Heart left ventricle (tissue), 16 donors: ENCODE measurements at regions of chr2 and their contacts with region 1.

Region 1: DNA sequence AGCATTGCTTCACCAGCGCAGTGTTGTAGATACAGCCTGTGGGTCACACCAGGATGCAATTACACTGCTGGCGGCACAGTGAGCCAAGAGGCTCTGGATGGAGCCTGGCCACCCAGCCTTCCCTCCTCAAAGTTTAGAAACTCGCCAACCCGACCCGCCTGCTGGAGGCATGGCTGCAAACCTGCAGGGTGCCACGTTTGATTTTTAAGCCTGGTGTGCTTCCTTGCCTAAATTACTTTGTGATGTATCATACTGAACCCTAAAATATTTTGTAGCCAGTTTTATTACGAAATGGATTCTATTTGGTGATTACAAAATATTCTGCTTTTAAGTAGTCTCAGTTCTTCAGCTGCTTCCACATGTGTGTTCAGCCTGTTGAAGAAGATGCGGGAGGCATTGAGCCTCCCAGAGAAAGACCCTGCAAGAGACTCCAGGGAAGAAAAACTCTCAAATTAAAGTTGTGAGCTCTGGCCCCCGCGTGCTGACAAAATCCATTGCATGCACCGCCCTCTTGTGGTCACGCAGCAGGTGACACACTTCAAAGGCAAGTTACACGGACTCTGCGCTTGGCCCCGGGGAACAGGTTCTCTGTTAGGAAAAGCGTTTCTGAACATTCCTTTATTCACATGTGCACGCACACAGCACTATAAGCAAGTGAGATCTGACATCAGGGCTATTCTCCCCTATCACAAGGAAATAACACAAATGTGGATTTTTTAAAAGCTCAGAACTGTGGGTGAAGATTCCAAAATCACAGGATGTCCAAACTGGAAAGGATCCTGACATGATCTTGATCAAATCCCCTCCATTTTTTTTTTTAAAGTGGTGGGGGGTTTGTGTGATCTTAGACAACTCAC is 63.0 kb upstream of the TWIST2 start:
- DNase-seq: peak; percentile 45 to 78 (median 56)
- ATAC-seq: peak in 3 of 4 donors; percentile 62 to 87 (median 78)
- H3K4me3 ChIP-seq: peak overlapping the region in 3 of 12 donors; percentile 2 to 13 (median 8)
- H3K27ac ChIP-seq: peak overlapping the region in 1 of 12 donors; percentile 19
- H3K4me1 ChIP-seq: no peaks in the 10 kb centered on the region
- H3K27me3 ChIP-seq: peaks cover 0 to 7% (median 0%) of the 10 kb centered on the region in 9 donors
- CTCF ChIP-seq: peak; percentile 76 to 89 (median 84)
- POLR2A ChIP-seq: no peak

Region 2: GRCh38 chr2:238362626-238363025 is 422.3 kb before region 1 on chr2:
- intact Hi-C with region 1: loop called in 8 of 10 experiments (anchors 5 to 10 kb)
- DNase-seq: no peak
- ATAC-seq: peak in 1 of 4 donors; percentile 13
- H3K4me3 ChIP-seq: no peak overlapping the region
- H3K27ac ChIP-seq: no peak overlapping the region
- H3K4me1 ChIP-seq: peaks cover 0 to under 1% (median 0%) of the 10 kb centered on the region in 12 donors
- H3K27me3 ChIP-seq: no peaks in the 10 kb centered on the region
- CTCF ChIP-seq: no peak
- POLR2A ChIP-seq: no peak

Region 3: GRCh38 chr2:238513346-238513745 is 271.6 kb before region 1 on chr2:
- intact Hi-C with region 1: loop called in 7 of 10 experiments (anchors 2 to 10 kb)
- DNase-seq: peak in 1 of 5 donors; percentile 43
- ATAC-seq: peak in 3 of 4 donors; percentile 41 to 58 (median 45)
- H3K4me3 ChIP-seq: no peak overlapping the region
- H3K27ac ChIP-seq: no peak overlapping the region
- H3K4me1 ChIP-seq: no peaks in the 10 kb centered on the region
- H3K27me3 ChIP-seq: peaks cover 0 to 21% (median 0%) of the 10 kb centered on the region in 9 donors
- CTCF ChIP-seq: peak in 11 of 12 donors; percentile 25 to 53 (median 39)
- POLR2A ChIP-seq: no peak

Region 4: DNA sequence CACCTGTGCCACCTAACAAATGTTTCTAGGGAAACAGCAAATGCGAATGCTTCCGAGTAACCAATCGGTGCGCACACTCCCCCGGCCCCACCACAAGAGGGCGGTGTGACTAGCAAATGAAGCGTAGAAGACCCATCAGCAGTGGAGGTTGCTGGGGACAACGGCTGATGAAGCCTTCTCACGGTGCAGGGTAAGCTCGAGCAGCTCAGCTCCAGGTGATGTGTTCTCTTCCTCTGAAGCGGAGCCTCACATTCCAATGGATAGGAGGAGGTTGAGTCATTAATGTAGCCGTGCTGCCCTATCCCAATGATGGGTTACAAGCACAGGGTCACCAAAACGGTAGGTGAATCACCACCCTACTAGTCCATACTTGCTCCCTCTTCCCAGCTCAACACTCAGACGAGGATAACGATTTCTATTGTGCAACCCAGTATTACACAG is 64.6 kb before region 1 on chr2:
- intact Hi-C with region 1: loop called in 2 of 10 experiments (anchors 2 to 5 kb)
- DNase-seq: no peak
- ATAC-seq: peak in 3 of 4 donors; percentile 47 to 80 (median 60)
- H3K4me3 ChIP-seq: no peak overlapping the region
- H3K27ac ChIP-seq: no peak overlapping the region
- H3K4me1 ChIP-seq: no peaks in the 10 kb centered on the region
- H3K27me3 ChIP-seq: peaks cover 0 to 12% (median 0%) of the 10 kb centered on the region in 9 donors
- CTCF ChIP-seq: peak; percentile 28 to 70 (median 54)
- POLR2A ChIP-seq: no peak